Dorsolateral prefrontal cortex (tissue), 120 donors: ENCODE measurements at regions of chr16 and their contacts with region 1.

Region 1: DNA sequence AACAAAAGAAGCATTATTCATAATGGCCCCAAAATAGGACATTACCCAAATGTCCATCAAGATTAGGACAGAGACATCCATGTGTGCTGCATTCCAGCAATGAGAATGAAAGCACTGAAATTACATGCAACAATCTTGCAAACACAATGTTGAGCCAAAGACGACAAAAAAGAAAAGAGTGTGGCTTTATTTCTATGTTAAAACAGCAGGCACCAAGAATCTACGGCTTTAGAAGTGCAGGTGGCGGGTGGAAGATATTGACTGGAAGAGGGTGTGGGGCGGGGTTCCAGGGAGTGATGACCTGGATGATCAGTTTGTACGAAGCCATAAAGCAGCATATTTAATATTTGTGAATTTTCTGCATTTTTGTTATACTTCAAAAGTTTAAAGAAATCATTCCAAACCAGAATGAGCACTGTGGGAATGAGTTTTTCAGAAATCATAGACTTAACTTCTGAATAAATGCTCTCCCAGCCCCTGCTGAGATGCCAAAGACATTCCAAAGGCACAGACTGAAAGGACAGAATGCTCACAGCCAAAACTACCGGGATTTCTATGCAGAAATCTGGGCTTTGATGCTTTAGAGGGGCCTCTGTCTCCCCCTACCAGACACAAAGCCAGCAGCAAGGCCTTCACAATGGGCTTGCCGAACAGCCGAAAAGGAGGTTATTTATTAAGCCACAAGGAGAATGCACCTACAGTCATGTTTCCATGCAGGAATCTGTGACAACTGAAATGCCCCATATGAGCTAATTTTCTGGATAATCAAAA is 361.6 kb downstream of the GRIN2A start:
- DNase-seq: peak in 1 of 10 donors; percentile 9
- H3K4me3 ChIP-seq: peak overlapping the region in 5 of 59 donors; percentile 10 to 38 (median 13)
- H3K27ac ChIP-seq: peak overlapping the region in 57 of 59 donors; percentile 7 to 94 (median 73)
- H3K27me3 ChIP-seq: no peaks in the 10 kb centered on the region
- CTCF ChIP-seq: peak in 17 of 56 donors; percentile 11 to 35 (median 21)

Region 2: DNA sequence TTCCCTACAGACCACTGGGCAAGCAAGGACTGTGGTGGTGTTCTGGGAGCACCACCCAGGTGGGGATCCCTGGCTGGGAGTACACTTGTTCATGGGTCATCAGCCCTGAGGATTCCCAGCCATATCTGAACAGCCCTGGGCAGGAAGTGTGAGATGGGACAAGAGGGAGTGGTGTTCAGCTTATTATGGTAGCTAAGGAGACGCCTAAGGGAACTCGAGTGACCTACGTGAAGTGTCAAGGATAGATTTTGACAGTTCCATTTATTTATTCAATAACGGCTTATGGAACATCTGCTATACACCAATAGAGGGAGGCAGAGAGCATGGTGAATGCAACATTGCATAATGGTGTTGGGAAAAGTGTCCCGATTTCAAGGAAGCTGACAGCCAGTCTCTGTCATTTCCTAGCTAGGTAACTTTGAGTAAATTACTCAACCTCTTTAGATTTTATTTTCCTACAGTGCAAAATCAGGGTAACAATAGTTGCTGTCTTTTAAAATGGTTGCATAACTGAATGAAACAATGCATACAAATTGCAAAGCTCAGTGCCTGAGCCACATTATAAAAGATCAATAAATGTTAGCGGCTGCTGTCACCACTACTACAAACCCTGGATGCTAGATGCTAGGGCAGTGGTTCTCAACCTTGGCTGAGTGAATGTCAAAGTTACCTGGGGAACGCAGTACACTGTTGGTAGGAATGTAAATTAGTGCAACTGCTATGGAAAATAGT is 172.5 kb before region 1 on chr16:
- intact Hi-C with region 1: loop called in 1 of 2 experiments (anchors 10 kb)
- DNase-seq: peak in 2 of 10 donors; percentile 12 to 29
- H3K4me3 ChIP-seq: no peak overlapping the region
- H3K27ac ChIP-seq: no peak overlapping the region
- H3K27me3 ChIP-seq: no peaks in the 10 kb centered on the region
- CTCF ChIP-seq: peak; percentile 46 to 78 (median 70)

Region 3: DNA sequence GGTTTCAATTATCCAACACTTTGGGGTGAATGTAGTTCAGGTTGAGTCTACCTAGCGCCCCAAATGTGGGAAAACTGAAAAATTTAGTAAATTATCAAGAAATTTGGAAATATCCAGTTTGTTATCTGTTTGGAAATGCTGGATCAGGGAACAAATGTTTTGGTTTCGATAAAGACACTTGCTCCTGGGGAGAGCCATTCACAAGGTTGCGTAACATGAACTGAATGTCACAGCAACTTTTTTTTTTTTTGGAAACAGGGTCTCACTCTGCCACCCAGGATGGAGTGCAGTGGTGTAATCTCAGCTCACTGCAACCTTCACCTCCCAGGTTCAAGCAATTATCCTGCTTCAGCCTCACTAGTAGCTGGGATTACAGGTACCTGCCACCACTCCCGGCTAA is 75.2 kb after region 1 on chr16:
- intact Hi-C with region 1: no loop called
- DNase-seq: no peak
- H3K4me3 ChIP-seq: no peak overlapping the region
- H3K27ac ChIP-seq: no peak overlapping the region
- H3K27me3 ChIP-seq: no peaks in the 10 kb centered on the region
- CTCF ChIP-seq: no peak

Region 4: DNA sequence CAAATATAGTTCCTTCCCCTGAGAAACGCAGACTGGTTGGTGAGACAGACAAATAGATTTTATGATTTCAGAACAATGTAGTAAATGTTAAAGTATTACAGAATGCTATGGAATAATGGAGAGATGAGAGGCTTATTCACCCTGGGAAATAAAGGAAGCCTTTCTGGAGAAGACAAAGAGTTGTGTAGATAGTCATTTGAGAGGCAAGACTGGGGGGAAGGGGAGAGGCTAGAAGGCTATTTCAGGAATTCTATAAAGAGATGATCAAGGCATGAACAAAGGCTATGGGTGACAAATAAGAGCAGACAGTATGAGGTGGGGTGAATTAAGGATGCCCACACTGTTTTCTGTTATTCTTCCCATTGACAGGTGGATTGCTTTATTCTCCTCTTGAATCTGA is 150.1 kb after region 1 on chr16:
- intact Hi-C with region 1: loop called in 1 of 2 experiments (anchors 5 kb)
- DNase-seq: no peak
- H3K4me3 ChIP-seq: peak overlapping the region in 15 of 59 donors; percentile 3 to 48 (median 21)
- H3K27ac ChIP-seq: peak overlapping the region in 58 of 59 donors; percentile 39 to 100 (median 90)
- H3K27me3 ChIP-seq: no peaks in the 10 kb centered on the region
- CTCF ChIP-seq: peak in 1 of 56 donors; percentile 11

Region 5: GRCh38 chr16:10009684-10010083 is 189.0 kb after region 1 on chr16:
- intact Hi-C with region 1: loop called in 1 of 2 experiments (anchors 10 kb)
- DNase-seq: peak; percentile 38 to 85 (median 66)
- H3K4me3 ChIP-seq: peak overlapping the region in 3 of 59 donors; percentile 4 to 22 (median 9)
- H3K27ac ChIP-seq: peak overlapping the region; percentile 5 to 97 (median 90)
- H3K27me3 ChIP-seq: no peaks in the 10 kb centered on the region
- CTCF ChIP-seq: peak in 1 of 56 donors; percentile 10

Region 6: GRCh38 chr16:10039220-10040096 is 218.8 kb after region 1 on chr16:
- intact Hi-C with region 1: loop called in 1 of 2 experiments (anchors 5 kb)
- DNase-seq: peak; percentile 55 to 79 (median 68)
- H3K4me3 ChIP-seq: peak overlapping the region; percentile 24 to 71 (median 50)
- H3K27ac ChIP-seq: peak overlapping the region in 58 of 59 donors; percentile 10 to 97 (median 85)
- H3K27me3 ChIP-seq: no peaks in the 10 kb centered on the region
- CTCF ChIP-seq: peak in 53 of 56 donors; percentile 16 to 72 (median 52)